ENCODE measurements at regions of chr21 and their contacts with region 1.

Region 1: GRCh38 chr21:28636988-28637691 is 355.5 kb downstream of the LTN1 start:
- DNase-seq: no peak
- H3K4me3 ChIP-seq: peak overlapping the region in 1 of 2 donors; percentile 37
- H3K27ac ChIP-seq: peak overlapping the region; percentile 86 to 92
- H3K4me1 ChIP-seq: peaks cover 3 to 39% of the 10 kb centered on the region in 2 donors
- H3K27me3 ChIP-seq: no peaks in the 10 kb centered on the region
- CTCF ChIP-seq: no peak

Region 2: DNA sequence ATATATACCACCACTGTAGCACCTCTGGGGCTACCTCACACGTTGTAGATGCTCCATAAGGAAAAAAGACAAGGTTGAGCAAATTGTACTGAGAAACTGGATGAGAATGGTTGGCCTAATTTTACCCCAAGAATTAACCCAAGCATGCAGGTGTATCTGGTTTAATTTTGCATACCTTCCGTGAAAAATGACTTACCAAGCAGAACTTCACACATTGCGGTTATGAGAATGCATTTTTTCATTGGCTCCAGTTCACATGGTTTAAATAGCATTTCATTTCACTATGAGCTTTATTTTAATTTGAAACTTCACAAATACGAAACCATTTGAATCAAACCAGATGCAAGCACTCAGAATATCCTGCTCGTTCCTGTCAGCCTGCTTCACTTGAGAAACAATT is 156.7 kb before region 1 on chr21:
- intact Hi-C with region 1: loop called (anchors 5 kb)
- DNase-seq: no peak
- H3K4me3 ChIP-seq: no peak overlapping the region
- H3K27ac ChIP-seq: no peak overlapping the region
- H3K4me1 ChIP-seq: no peaks in the 10 kb centered on the region
- H3K27me3 ChIP-seq: no peaks in the 10 kb centered on the region
- CTCF ChIP-seq: no peak

Region 3: GRCh38 chr21:28671549-28672195 is 34.5 kb after region 1 on chr21:
- intact Hi-C with region 1: no loop called
- DNase-seq: no peak
- H3K4me3 ChIP-seq: no peak overlapping the region
- H3K27ac ChIP-seq: no peak overlapping the region
- H3K4me1 ChIP-seq: peaks cover 3 to 10% of the 10 kb centered on the region in 2 donors
- H3K27me3 ChIP-seq: no peaks in the 10 kb centered on the region
- CTCF ChIP-seq: no peak

Region 4: DNA sequence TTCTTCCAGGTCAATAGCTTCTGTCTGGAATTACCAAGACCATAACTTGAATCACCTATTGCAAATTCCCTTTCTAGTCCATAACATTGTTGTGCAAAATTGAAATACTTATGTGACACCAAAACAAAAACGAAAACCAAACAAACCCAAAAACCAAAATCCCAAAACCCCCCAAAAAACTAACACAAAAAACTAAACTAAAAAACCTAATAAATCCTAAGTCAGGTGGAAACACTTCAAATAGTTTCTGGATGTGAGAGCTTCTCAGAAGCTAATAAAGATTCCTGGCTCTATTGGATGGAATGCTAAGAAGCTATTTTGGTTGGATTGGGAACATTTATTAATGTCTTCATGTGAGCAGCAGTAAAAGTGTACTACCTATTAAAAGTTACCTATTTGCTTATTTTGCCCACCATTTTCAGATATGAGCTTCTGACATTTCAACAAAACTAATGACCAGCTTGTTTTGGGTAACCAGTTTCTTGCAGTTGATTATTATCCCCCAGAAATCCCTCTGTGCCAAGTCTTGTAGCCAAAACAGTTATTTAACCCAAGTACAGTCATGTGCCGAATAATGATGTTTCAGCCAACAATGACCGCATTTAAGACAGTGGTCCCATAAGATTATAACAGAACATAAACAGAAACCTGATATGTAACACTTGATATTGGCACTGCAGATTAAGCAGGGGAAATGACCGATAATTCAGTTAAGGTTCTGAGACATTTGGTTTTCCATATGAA is 279.2 kb after region 1 on chr21:
- intact Hi-C with region 1: loop called (anchors 10 kb)
- DNase-seq: no peak
- H3K4me3 ChIP-seq: no peak overlapping the region
- H3K27ac ChIP-seq: no peak overlapping the region
- H3K4me1 ChIP-seq: peaks cover 0 to 8% of the 10 kb centered on the region in 2 donors
- H3K27me3 ChIP-seq: no peaks in the 10 kb centered on the region
- CTCF ChIP-seq: no peak

Measured in ascending aorta (tissue), 2 donors.